ENCODE measurements at regions of chr3 and their contacts with region 1.

Region 1: DNA sequence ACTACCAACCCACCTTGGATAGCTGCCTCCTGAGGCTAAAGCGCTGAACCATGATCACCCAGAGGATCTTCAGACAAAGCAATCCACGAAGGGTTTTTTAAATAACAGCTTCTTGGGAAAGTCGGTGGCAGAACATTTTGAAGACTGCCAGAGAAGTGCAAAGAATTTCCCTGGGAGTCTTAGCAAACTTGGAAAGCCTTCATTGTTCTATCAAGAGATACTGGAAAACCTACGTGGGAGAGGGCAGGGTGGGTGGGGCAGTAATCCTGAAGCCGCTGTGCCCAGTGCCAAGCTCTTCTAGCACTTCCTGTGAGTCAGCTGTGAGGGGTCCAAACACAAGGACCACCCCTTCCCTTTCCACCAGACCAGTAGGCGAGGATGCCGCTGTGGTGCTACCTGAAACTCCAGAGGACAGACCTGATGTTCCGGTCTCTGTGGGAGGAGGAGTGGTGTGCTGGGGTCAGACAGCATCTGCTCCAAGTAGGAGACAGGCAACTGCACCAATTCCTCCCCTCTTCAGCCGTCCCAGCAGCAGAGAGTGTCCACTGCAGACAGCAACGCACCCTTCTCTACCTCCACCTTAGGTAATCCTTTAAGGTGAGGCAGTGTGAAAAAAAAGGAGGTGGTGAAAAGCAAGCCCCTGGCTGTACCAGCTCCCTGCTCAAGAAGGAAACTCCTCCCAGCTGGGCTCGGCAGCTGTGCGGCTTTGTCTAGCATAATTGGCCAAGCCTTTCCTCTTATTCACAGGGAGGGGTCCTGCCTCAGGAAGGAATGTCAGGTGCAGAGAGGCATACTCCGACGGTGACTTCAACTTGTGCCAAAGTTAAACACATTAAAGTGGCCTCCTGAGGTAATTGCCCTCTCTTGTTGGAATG is 99.0 kb downstream of the TMCC1 start:
- DNase-seq: peak; percentile 97
- H3K4me3 ChIP-seq: peak overlapping the region; percentile 49 to 82 (median 55)
- H3K27ac ChIP-seq: peak overlapping the region; percentile 99
- H3K4me1 ChIP-seq: peaks cover 27% of the 10 kb centered on the region
- H3K27me3 ChIP-seq: no peaks in the 10 kb centered on the region
- CTCF ChIP-seq: no peak

Region 2: DNA sequence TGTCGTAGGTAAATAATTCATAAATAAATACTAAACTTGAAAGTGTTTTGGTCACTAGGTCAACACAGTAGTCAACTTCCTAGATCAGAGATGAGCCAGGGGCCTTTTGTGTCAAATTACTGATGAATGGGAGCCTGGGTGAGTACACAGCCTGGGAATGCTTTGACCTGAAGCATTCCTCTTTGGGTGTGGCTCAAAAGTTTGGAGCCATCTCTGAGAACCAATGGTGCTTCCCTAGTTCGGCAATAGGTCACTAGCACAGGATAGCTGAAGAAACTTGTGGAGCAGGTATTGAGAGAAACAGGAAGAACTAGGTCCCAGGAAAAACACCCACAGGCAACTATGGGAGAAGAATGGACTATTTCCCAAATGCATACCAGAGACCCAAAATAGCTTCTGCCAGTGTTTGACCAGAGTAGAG is 131.5 kb before region 1 on chr3:
- CTCF ChIA-PET with region 1: no interaction called
- dilution Hi-C with region 1: no loop called
- in situ Hi-C with region 1: no loop called
- intact Hi-C with region 1: loop called (anchors 1 kb)
- DNase-seq: peak; percentile 91
- H3K4me3 ChIP-seq: no peak overlapping the region
- H3K27ac ChIP-seq: peak overlapping the region; percentile 94
- H3K4me1 ChIP-seq: peaks cover 49% of the 10 kb centered on the region
- H3K27me3 ChIP-seq: no peaks in the 10 kb centered on the region
- CTCF ChIP-seq: no peak

Region 3: GRCh38 chr3:129690406-129690805 is 104.1 kb before region 1 on chr3:
- CTCF ChIA-PET with region 1: no interaction called
- dilution Hi-C with region 1: no loop called
- in situ Hi-C with region 1: no loop called
- intact Hi-C with region 1: loop called (anchors 1 kb)
- DNase-seq: peak; percentile 65
- H3K4me3 ChIP-seq: no peak overlapping the region
- H3K27ac ChIP-seq: no peak overlapping the region
- H3K4me1 ChIP-seq: peaks cover 21% of the 10 kb centered on the region
- H3K27me3 ChIP-seq: no peaks in the 10 kb centered on the region
- CTCF ChIP-seq: no peak

Region 4: DNA sequence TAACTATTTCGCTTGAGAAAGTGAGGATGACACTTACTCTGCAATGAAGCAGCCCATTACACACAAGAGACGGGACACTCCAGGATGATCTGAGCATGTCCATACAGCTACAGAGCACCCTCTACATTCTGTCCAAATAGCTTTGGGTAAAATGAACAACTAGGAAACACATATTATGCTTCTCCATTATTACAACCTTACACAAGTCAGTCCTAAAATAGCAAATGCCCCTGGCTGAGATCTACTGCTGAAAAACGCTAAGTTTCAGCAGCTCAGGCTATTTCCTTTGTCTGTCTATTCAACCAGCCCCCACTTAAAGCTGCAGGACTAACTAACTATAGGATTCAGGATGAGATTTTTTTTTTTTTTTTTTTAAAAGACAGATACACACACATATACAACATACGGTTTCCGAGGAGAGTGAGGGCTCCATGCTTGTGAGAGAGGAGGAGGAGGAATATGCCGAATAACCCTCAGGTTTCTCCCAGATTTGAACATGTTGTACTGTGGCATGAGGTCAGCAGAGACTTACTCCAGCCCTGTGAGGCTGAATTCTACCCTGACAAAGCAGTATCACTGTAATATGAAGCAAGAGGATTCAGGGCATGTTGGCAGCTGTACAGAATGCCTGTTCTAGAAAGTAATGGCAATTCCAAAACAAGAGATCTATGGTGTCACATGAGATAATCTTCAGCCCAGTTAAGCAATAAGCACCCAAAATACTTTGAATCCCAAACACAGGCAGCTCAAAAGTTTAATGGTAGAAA is 70.8 kb before region 1 on chr3:
- CTCF ChIA-PET with region 1: no interaction called
- dilution Hi-C with region 1: no loop called
- in situ Hi-C with region 1: no loop called
- intact Hi-C with region 1: loop called (anchors 5 kb)
- DNase-seq: peak; percentile 89
- H3K4me3 ChIP-seq: peak overlapping the region; percentile 22 to 46 (median 33)
- H3K27ac ChIP-seq: peak overlapping the region; percentile 89
- H3K4me1 ChIP-seq: peaks cover 21% of the 10 kb centered on the region
- H3K27me3 ChIP-seq: no peaks in the 10 kb centered on the region
- CTCF ChIP-seq: no peak

Region 5: GRCh38 chr3:129732200-129732876 is 62.2 kb before region 1 on chr3:
- CTCF ChIA-PET with region 1: no interaction called
- dilution Hi-C with region 1: no loop called
- in situ Hi-C with region 1: no loop called
- intact Hi-C with region 1: loop called (anchors 5 kb)
- DNase-seq: peak; percentile 69
- H3K4me3 ChIP-seq: no peak overlapping the region
- H3K27ac ChIP-seq: peak overlapping the region; percentile 23
- H3K4me1 ChIP-seq: peaks cover 16% of the 10 kb centered on the region
- H3K27me3 ChIP-seq: no peaks in the 10 kb centered on the region
- CTCF ChIP-seq: no peak

Region 6: DNA sequence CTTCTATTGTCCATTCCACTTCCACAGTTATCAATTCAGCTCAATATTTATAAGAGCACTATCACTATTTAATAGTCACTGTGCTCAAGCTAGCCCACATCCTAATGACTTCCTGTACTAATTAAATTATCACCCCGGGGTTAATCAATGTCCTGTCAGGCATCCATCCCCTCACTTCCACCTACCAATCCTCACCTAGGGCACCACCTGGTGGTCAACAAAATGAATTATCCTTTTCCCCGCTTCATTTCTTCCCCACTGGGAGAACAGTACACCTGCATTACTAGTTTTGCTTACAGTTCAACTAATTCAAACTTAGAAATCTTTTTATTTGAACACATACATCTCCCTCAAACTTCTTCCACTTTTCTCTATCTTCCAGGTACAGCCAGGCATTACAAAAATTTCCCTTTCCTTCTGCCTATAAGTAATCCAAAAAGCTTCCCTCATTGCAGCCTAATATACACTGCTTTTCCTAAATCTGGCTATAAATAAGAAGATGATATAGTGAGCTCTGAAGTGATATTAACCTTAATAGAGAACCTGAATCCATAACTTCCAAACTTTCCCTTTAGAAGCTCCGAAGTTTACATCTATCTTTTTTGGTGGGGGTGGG is 30.5 kb after region 1 on chr3:
- CTCF ChIA-PET with region 1: no interaction called
- dilution Hi-C with region 1: no loop called
- in situ Hi-C with region 1: no loop called
- intact Hi-C with region 1: loop called (anchors 1 kb)
- DNase-seq: peak; percentile 29
- H3K4me3 ChIP-seq: no peak overlapping the region
- H3K27ac ChIP-seq: no peak overlapping the region
- H3K4me1 ChIP-seq: peaks cover 5% of the 10 kb centered on the region
- H3K27me3 ChIP-seq: no peaks in the 10 kb centered on the region
- CTCF ChIP-seq: peak; percentile 52 to 70